Gastrocnemius medialis (tissue), 4 donors: ENCODE measurements at regions of chr20 and their contacts with region 1.

Region 1: DNA sequence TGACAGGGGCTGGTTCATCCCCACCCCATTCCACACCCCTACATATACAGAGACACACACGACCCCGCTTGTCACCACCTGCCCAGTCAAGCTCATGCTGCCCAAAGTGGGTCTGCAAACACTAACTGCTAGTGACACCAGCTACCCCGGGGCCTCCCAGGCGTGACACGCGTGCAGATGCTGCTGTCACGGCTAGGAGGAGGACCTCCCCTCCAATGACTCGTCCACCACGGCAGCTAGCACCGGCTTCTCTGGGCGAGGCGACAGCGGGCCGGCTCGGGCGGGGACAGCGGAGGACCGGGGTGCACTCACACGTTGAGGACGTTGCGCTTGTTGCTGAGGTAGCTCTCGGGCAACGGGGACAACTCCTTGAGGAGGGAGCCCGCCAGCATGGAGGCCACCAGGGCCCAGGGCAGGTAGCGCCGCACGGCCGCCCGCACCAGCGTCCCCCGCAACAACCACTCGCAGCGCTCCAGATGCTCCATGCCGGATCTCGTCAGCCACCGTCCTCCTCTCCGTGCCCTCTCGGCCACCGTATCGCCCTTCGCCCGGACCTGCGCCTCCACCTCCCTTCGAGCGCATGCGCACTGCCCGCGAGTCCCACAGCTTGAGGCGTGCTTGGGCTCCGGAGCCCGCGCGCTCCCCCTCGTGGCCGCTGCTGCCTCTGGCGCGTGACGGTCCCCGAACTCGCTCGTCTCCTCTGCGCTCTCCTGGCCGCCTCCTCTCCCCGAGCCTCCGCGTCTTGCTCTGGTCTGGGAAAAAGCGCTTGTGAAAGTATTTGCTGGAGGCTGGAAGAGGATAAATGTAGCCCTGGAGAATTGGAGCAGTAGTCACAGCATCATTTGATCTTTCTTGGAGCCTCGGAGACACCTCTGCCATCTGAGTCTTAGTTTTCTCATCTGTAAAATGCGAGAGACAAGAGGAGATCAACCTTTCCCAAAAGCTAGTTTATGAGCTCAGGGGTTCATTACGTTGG is at the start of gene FITM2:
- DNase-seq: peak; percentile 98
- ATAC-seq: peak; percentile 91 to 93
- H3K4me3 ChIP-seq: peak within 1 kb of the TSS; percentile 82 to 97 (median 88)
- H3K27ac ChIP-seq: peak within 1 kb of the TSS; percentile 85 to 93 (median 88)
- H3K4me1 ChIP-seq: peaks cover 11 to 22% of the 10 kb centered on the region in 2 donors
- H3K27me3 ChIP-seq: no peaks in the 10 kb centered on the region
- CTCF ChIP-seq: peak; percentile 93 to 98 (median 97)
- POLR2A ChIP-seq: peak; percentile 57 to 69
- total RNA-seq, gene FITM2: 7.6 to 10.1 (median 8.7) TPM

Region 2: GRCh38 chr20:43456809-43457639 is 853.9 kb before region 1 on chr20:
- in situ Hi-C with region 1: no loop called
- intact Hi-C with region 1: loop called (anchors 10 kb)
- DNase-seq: peak; percentile 89 to 90
- ATAC-seq: peak; percentile 96 to 98
- H3K4me3 ChIP-seq: peak overlapping the region; percentile 88 to 97 (median 96)
- H3K27ac ChIP-seq: peak overlapping the region; percentile 99 to 100 (median 100)
- H3K4me1 ChIP-seq: peaks cover 11 to 25% of the 10 kb centered on the region in 2 donors
- H3K27me3 ChIP-seq: no peaks in the 10 kb centered on the region
- CTCF ChIP-seq: no peak
- POLR2A ChIP-seq: no peak

Region 3: DNA sequence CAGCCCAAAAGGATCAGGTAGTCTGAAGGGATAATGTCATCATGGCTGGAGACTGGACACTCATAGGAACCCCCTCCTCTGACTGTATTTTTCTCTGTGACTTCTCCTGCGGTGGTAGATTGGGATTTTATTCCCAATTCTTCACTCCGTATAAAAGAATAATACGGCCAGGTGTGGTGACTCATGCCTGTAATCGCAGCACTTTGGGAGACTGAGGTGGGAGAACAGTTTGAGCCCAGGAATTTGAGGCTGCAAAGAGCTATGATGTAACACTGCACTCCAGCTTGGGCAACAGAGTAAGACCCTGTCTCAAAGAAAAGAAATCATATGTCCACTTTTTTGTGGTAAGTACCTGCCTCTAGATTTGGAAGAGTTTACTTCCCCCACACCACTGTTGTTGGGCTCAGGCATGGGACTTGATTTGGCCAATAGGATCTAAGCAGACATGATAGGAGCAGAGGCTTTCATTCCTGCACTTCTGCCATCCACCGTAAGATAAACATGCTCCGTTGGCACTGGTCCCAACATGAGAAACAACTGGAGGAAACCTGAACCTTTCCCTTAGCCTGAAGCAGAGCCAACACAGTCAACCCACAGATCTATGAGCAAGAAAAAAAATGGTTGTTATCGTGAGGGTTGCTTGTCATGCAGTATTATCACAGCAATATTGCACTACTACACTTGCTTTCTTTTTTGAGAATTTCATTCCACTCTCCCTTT is 206.0 kb before region 1 on chr20:
- in situ Hi-C with region 1: loop called (anchors 10 to 25 kb)
- intact Hi-C with region 1: loop called (anchors 5 kb)
- DNase-seq: peak; percentile 66 to 77
- ATAC-seq: peak; percentile 82 to 93
- H3K4me3 ChIP-seq: no peak overlapping the region
- H3K27ac ChIP-seq: peak overlapping the region in 3 of 4 donors; percentile 29 to 55 (median 33)
- H3K4me1 ChIP-seq: peaks cover 4 to 11% of the 10 kb centered on the region in 2 donors
- H3K27me3 ChIP-seq: no peaks in the 10 kb centered on the region
- CTCF ChIP-seq: no peak
- POLR2A ChIP-seq: no peak

Region 4: DNA sequence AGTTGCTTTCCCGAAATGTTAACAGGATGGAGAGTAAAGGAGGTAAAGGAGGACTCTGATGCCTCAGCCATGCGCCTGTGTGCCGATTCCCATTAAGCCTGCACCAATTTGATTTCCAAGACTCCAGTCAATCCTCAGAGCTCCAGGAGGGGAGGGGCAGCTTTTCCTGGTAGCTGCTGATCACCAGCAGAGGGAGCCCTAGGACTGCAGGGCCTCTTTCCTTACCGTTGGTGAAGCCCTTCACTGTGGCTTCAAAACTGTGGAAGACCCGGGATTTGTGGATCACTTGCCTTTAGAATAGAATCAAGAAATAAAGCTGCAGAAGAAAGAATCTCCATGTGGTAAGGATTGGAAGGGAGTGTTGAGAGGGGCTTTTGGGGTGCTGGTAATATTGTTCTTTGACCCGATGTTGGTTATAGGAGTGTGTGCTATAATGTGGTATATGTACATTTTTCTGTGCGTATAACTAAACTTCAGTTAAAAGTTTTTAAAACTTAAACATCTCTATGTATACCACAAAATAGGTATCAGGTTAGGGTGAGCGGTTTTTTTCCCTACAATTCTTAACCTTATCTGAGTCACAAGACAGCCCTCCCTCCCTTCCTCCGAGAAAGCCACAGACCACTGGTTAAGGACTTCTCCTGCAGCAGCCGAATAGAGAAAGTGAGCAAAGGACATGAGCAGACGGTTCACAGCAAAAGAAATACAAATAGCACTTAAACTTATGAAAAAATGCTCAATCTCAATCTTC is 93.4 kb before region 1 on chr20:
- in situ Hi-C with region 1: loop called (anchors 5 kb)
- intact Hi-C with region 1: loop called (anchors 1 kb)
- DNase-seq: peak; percentile 57 to 68
- ATAC-seq: peak; percentile 84 to 90
- H3K4me3 ChIP-seq: no peak overlapping the region
- H3K27ac ChIP-seq: no peak overlapping the region
- H3K4me1 ChIP-seq: peaks cover 8 to 13% of the 10 kb centered on the region in 2 donors
- H3K27me3 ChIP-seq: no peaks in the 10 kb centered on the region
- CTCF ChIP-seq: peak; percentile 78 to 96 (median 88)
- POLR2A ChIP-seq: no peak

Region 5: GRCh38 chr20:44521484-44522481 is 210.8 kb after region 1 on chr20 and contains the start of gene SERINC3:
- in situ Hi-C with region 1: no loop called
- intact Hi-C with region 1: loop called (anchors 2 kb)
- DNase-seq: peak; percentile 94 to 96
- ATAC-seq: peak; percentile 93 to 95
- H3K4me3 ChIP-seq: peak within 1 kb of the TSS; percentile 94 to 100 (median 98)
- H3K27ac ChIP-seq: peak within 1 kb of the TSS; percentile 98 to 100 (median 100)
- H3K4me1 ChIP-seq: peaks cover 42 to 49% of the 10 kb centered on the region in 2 donors
- H3K27me3 ChIP-seq: no peaks in the 10 kb centered on the region
- CTCF ChIP-seq: no peak
- POLR2A ChIP-seq: peak; percentile 97
- total RNA-seq, gene SERINC3: 93.3 to 174 (median 139) TPM

Region 6: DNA sequence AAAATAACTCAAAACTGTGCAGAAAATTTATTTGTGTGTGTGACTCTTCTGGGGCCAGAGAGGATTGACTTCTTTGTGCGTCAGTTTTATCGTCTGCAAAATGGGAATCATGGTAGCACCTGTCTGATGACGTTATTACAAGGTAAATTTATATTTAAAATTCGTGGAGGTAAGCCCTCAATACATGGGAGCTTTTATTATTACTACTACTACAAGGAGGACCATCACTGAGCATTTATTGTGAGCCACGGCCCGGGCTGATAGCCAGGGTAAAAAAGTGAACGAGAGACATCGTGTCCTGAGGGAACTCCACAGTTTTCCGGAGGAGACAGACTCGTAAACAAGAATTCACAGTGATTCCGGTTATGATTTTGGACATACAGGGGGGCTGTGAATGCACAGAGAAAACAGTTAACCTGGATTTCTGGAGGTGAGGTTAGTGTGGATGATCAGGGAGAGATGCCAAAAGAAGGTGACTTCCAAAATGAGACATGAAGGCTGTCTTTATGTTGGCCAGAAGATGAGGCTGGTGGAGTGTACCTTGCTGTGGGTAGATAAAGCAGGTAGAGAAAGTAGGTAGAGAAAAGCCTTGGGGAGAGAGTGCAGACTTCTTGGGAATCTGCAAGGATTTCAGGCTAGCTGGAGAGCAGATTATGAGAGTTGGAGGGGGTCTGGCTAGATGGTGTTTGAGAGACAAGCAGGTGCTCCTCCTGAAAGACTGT is 221.5 kb after region 1 on chr20:
- in situ Hi-C with region 1: no loop called
- intact Hi-C with region 1: loop called (anchors 5 kb)
- DNase-seq: no peak
- ATAC-seq: peak; percentile 28 to 38
- H3K4me3 ChIP-seq: peak overlapping the region; percentile 63 to 82 (median 78)
- H3K27ac ChIP-seq: peak overlapping the region; percentile 74 to 85 (median 77)
- H3K4me1 ChIP-seq: peaks cover 9 to 15% of the 10 kb centered on the region in 2 donors
- H3K27me3 ChIP-seq: no peaks in the 10 kb centered on the region
- CTCF ChIP-seq: no peak
- POLR2A ChIP-seq: no peak

Region 7: GRCh38 chr20:44733341-44734069 is 422.6 kb after region 1 on chr20:
- in situ Hi-C with region 1: no loop called
- intact Hi-C with region 1: loop called (anchors 10 kb)
- DNase-seq: peak; percentile 53 to 70
- ATAC-seq: peak; percentile 37 to 45
- H3K4me3 ChIP-seq: no peak overlapping the region
- H3K27ac ChIP-seq: no peak overlapping the region
- H3K4me1 ChIP-seq: peaks cover 30 to 36% of the 10 kb centered on the region in 2 donors
- H3K27me3 ChIP-seq: no peaks in the 10 kb centered on the region
- CTCF ChIP-seq: peak; percentile 94 to 98 (median 96)
- POLR2A ChIP-seq: no peak